ENCODE measurements at regions of chrX and their contacts with region 1.

Region 1: GRCh38 chrX:24748202-24748843 is 54.6 kb downstream of the POLA1 start:
- H3K4me3 ChIP-seq: no peak overlapping the region
- H3K27ac ChIP-seq: no peak overlapping the region
- H3K4me1 ChIP-seq: no peaks in the 10 kb centered on the region
- CTCF ChIP-seq: no peak

Region 2: GRCh38 chrX:24760363-24761000 is 12.2 kb after region 1 on chrX:
- CTCF ChIA-PET with region 1: interaction called, 19 read pairs
- POLR2A ChIA-PET with region 1: no interaction called
- H3K4me3 ChIP-seq: no peak overlapping the region
- H3K27ac ChIP-seq: no peak overlapping the region
- H3K4me1 ChIP-seq: no peaks in the 10 kb centered on the region
- CTCF ChIP-seq: no peak

Region 3: DNA sequence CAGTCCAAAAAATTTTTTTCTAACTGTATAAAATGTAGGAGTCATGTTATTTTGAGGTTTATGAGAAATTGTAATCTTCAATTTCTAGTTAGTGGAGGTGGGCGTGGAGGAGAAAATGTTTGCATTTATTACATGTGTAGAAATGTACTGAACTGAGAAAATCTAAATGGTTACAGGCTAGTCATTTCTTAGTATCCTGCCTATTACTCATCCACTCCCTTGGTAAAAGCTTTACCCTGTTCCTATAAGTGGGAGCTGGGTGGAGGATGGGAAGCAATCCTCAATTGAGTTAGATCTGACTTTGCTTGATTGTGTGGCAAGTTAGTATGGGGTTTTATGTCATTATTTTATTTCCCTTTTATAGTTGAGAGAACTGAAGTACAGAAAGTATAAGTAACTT is 19.2 kb after region 1 on chrX:
- CTCF ChIA-PET with region 1: interaction called, 19 read pairs
- POLR2A ChIA-PET with region 1: no interaction called
- H3K4me3 ChIP-seq: no peak overlapping the region
- H3K27ac ChIP-seq: no peak overlapping the region
- H3K4me1 ChIP-seq: no peaks in the 10 kb centered on the region
- CTCF ChIP-seq: no peak

Region 4: GRCh38 chrX:25049357-25049756 is 301.0 kb after region 1 on chrX:
- CTCF ChIA-PET with region 1: no interaction called
- POLR2A ChIA-PET with region 1: no interaction called
- H3K4me3 ChIP-seq: no peak overlapping the region
- H3K27ac ChIP-seq: no peak overlapping the region
- H3K4me1 ChIP-seq: no peaks in the 10 kb centered on the region
- CTCF ChIP-seq: no peak